ENCODE measurements at regions of chr9 and their contacts with region 1.

Region 1: GRCh38 chr9:71223953-71224538 is 102.6 kb upstream of the TRPM3 start:
- DNase-seq: no peak
- ATAC-seq: no peak
- H3K4me3 ChIP-seq: no peak overlapping the region
- H3K27ac ChIP-seq: no peak overlapping the region
- H3K4me1 ChIP-seq: no peaks in the 10 kb centered on the region
- H3K27me3 ChIP-seq: no peaks in the 10 kb centered on the region
- CTCF ChIP-seq: no peak
- POLR2A ChIP-seq: no peak
- RAD21 ChIP-seq: no peak

Region 2: GRCh38 chr9:70850396-70850795 is 373.6 kb before region 1 on chr9:
- CTCF ChIA-PET with region 1: no interaction called
- POLR2A ChIA-PET with region 1: no interaction called
- dilution Hi-C with region 1: no loop called
- in situ Hi-C with region 1: no loop called
- intact Hi-C with region 1: no loop called
- DNase-seq: no peak
- ATAC-seq: no peak
- H3K4me3 ChIP-seq: no peak overlapping the region
- H3K27ac ChIP-seq: no peak overlapping the region
- H3K4me1 ChIP-seq: no peaks in the 10 kb centered on the region
- H3K27me3 ChIP-seq: no peaks in the 10 kb centered on the region; the same call in 1 of the 2 replicates
- CTCF ChIP-seq: no peak
- POLR2A ChIP-seq: no peak
- RAD21 ChIP-seq: no peak

Region 3: DNA sequence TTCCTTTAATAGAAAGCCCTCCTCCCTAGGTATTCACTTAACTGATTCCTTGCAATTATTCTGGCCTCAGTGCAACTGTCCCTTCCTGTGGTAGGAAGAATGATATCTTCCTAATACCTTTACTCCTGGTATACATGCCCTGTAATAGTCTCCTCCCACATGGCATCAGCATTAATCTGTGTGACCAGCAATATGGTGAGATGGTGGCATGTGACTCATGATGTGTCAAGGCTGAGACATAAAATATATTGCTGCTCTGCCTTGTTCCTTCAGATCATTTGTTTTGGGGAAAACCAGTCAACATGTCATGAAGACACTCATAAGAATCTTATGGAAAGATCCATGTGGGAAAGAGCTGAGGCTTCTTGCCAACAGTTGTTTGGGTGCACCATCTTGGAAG is 46.5 kb after region 1 on chr9:
- CTCF ChIA-PET with region 1: no interaction called
- POLR2A ChIA-PET with region 1: no interaction called
- dilution Hi-C with region 1: no loop called
- in situ Hi-C with region 1: no loop called
- intact Hi-C with region 1: loop called (anchors 5 kb)
- DNase-seq: no peak
- ATAC-seq: no peak
- H3K4me3 ChIP-seq: no peak overlapping the region
- H3K27ac ChIP-seq: no peak overlapping the region
- H3K4me1 ChIP-seq: no peaks in the 10 kb centered on the region
- H3K27me3 ChIP-seq: no peaks in the 10 kb centered on the region
- CTCF ChIP-seq: no peak
- POLR2A ChIP-seq: no peak
- RAD21 ChIP-seq: no peak